B cell (primary cell): ENCODE measurements at regions of chr20 and their contacts with region 1.

Region 1: DNA sequence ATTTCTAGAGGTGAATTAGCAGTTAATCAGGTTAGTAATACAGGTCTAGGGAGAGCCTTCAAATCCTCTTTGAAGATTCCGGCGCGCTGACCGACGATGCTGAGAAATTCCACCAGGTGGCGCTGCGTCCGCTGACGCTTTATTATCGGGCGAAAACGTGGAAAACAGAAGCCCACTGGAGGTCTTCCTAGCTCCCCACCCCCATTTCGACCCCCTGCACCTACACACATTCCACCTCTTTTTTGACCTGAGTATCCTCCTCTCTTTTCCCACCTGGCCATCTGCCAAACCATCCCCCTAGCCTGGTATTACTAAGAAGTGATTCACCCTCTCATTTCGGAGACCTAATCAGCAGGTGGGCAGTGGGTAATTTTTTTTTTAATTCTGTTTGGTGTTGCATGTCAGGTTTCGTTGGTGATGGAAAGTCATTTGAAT is 65.4 kb upstream of the RIN2 start:
- DNase-seq: peak; percentile 73
- ATAC-seq: peak; percentile 51
- H3K4me3 ChIP-seq: peak overlapping the region in 1 of 5 experiments; percentile 16
- H3K4me3 Mint-ChIP-seq: peak overlapping the region; percentile 60
- H3K27ac ChIP-seq: no peak overlapping the region
- H3K27ac Mint-ChIP-seq: no peak overlapping the region
- H3K4me1 ChIP-seq: peaks cover 5 to 9% of the 10 kb centered on the region in 2 donors
- H3K4me1 Mint-ChIP-seq: peaks cover 6% of the 10 kb centered on the region
- H3K27me3 ChIP-seq: peaks cover 0 to 2% (median 0%) of the 10 kb centered on the region in 4 experiments
- H3K27me3 Mint-ChIP-seq: peaks cover 4% of the 10 kb centered on the region
- CTCF ChIP-seq: peak; percentile 98

Region 2: GRCh38 chr20:19735446-19735845 is 42.7 kb after region 1 on chr20:
- CTCF ChIA-PET with region 1: no interaction called
- POLR2A ChIA-PET with region 1: no interaction called
- intact Hi-C with region 1: loop called (anchors 5 kb)
- DNase-seq: no peak
- ATAC-seq: peak; percentile 78
- H3K4me3 ChIP-seq: no peak overlapping the region
- H3K4me3 Mint-ChIP-seq: no peak overlapping the region
- H3K27ac ChIP-seq: no peak overlapping the region
- H3K27ac Mint-ChIP-seq: no peak overlapping the region
- H3K4me1 ChIP-seq: peaks cover 4 to 5% of the 10 kb centered on the region in 2 donors
- H3K4me1 Mint-ChIP-seq: peaks cover 10% of the 10 kb centered on the region
- H3K27me3 ChIP-seq: no peaks in the 10 kb centered on the region
- H3K27me3 Mint-ChIP-seq: peaks cover 7% of the 10 kb centered on the region
- CTCF ChIP-seq: no peak

Region 3: DNA sequence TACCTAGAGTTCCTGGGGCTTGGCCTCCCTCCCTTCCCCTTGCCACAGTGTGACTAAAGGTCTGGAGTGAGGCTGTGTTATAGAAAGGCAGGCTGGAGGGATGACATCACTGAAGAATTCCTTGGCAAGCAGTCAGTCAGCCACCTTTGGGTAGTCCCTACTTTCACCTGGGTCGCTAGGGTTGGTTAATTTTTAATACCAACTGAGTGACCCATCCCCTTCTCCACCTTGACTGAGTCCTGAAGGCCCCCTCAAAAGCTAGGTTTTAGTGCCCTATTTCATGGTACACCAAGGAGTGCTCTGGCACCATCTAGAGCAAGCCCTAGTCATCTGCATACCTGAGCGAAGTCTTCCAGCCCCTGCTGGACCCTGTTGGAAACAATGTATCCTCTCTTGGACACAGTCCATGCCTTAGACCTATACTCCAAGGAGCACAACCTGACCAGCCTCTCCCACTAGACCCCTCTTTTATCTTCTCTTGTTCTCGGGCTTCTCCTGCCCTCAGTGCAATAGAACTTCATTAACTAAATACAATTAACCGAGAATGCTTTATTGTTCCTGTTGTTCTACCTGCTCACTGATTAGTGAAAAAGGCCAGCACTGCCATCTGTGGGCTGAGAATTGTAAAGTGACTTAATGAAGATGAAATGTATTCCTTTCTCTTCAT is 109.9 kb after region 1 on chr20:
- CTCF ChIA-PET with region 1: interaction called, 28 read pairs
- POLR2A ChIA-PET with region 1: no interaction called
- intact Hi-C with region 1: loop called (anchors 1 kb)
- DNase-seq: peak; percentile 51
- ATAC-seq: peak; percentile 41
- H3K4me3 ChIP-seq: no peak overlapping the region
- H3K4me3 Mint-ChIP-seq: no peak overlapping the region
- H3K27ac ChIP-seq: no peak overlapping the region
- H3K27ac Mint-ChIP-seq: no peak overlapping the region
- H3K4me1 ChIP-seq: peaks cover 13 to 14% of the 10 kb centered on the region in 2 donors
- H3K4me1 Mint-ChIP-seq: peaks cover 15% of the 10 kb centered on the region
- H3K27me3 ChIP-seq: no peaks in the 10 kb centered on the region
- H3K27me3 Mint-ChIP-seq: no peaks in the 10 kb centered on the region
- CTCF ChIP-seq: peak; percentile 56

Region 4: DNA sequence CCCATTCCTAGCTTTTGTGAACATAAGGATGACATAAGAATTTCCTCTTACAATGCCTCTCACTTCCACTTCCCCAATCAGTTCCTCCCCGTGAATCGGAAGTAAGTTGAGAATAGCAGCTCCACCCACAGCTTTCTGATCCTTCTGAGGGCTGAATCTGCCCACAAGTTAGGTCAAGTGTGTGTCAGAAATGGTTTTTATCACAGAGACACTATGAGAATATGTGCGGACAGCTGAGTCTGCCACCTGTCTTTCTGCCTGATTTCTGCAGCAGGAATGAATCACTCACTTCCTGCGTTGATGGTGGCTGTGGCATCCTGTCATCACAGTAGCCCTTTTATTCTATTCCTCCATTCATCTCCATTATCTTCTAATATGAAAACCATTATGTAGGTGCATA is 135.5 kb after region 1 on chr20:
- CTCF ChIA-PET with region 1: interaction called, 29 read pairs
- POLR2A ChIA-PET with region 1: interaction called, 6 read pairs
- intact Hi-C with region 1: loop called (anchors 1 kb)
- DNase-seq: peak; percentile 84
- ATAC-seq: peak; percentile 91
- H3K4me3 ChIP-seq: no peak overlapping the region
- H3K4me3 Mint-ChIP-seq: peak overlapping the region; percentile 12
- H3K27ac ChIP-seq: peak overlapping the region; percentile 44 to 48
- H3K27ac Mint-ChIP-seq: peak overlapping the region; percentile 66
- H3K4me1 ChIP-seq: peaks cover 58 to 63% of the 10 kb centered on the region in 2 donors
- H3K4me1 Mint-ChIP-seq: peaks cover 62% of the 10 kb centered on the region
- H3K27me3 ChIP-seq: no peaks in the 10 kb centered on the region
- H3K27me3 Mint-ChIP-seq: peaks cover under 1% of the 10 kb centered on the region
- CTCF ChIP-seq: peak; percentile 50

Region 5: DNA sequence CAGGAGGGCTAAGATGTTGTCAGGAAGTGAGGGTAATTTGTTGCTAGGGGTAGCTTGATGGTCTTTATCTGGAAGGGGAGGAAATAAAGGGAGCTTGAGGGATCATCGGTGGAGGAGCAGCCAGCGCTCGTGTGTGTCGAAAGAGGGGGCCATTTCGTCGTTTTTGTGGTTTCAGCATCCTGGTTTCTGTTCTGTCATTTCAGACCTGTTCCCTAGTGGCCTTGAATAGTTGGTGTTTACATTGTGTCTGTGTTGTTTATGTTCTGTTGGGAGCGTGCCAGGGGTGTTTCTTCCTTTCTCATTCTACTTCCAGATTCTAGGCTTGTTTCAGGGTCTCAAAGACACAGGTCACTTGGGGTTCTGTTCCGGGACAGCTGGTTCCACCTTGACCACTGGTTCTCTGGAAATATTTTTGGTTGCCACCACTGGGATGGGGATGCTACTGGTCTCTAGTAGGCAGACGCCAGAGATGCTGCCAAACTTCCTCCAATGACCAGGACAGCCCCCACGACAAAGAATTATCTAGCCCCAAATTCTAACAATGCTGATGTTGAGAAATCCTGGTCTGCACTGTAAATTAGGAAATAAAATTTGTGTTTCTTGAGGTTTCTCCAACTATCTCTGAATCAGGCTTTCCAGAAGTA is 210.6 kb after region 1 on chr20:
- CTCF ChIA-PET with region 1: interaction called, 5 read pairs
- POLR2A ChIA-PET with region 1: no interaction called
- intact Hi-C with region 1: loop called (anchors 1 kb)
- DNase-seq: peak; percentile 80
- ATAC-seq: peak; percentile 90
- H3K4me3 ChIP-seq: no peak overlapping the region
- H3K4me3 Mint-ChIP-seq: no peak overlapping the region
- H3K27ac ChIP-seq: no peak overlapping the region
- H3K27ac Mint-ChIP-seq: peak overlapping the region; percentile 17
- H3K4me1 ChIP-seq: peaks cover 7 to 10% of the 10 kb centered on the region in 2 donors
- H3K4me1 Mint-ChIP-seq: peaks cover 11% of the 10 kb centered on the region
- H3K27me3 ChIP-seq: no peaks in the 10 kb centered on the region
- H3K27me3 Mint-ChIP-seq: peaks cover 8% of the 10 kb centered on the region
- CTCF ChIP-seq: peak; percentile 48

Region 6: DNA sequence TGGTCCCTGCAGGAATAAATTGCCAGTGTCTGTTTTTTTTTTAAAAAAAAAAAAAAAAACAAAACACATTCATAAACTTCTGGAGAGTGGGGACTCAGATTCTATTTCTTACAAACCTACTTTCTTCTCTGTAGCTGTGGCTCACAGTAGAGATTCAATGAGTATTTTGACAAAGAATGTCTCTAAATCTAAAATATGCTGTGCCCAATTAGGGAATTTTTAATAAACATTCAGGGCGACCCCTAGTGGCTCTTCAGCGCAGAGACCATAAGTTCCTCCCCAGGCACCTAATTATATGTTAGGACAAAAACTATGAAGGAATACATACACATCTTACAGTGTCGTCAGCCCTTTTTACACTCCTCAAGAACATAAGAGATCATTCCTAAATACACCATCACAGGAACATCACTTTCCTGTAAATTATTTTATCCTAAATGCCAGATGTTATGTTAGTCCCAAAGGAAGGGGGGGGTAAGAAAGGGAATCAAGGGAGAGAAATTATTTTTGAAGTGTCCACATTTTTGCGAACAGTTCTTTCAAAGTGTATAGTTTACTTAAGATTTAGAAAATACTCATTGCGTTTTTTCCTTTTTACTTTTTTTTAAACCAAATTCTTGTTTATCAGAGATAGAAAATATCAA is 302.6 kb after region 1 on chr20:
- CTCF ChIA-PET with region 1: interaction called, 21 read pairs
- POLR2A ChIA-PET with region 1: no interaction called
- intact Hi-C with region 1: no loop called
- DNase-seq: peak; percentile 74
- ATAC-seq: peak; percentile 45
- H3K4me3 ChIP-seq: no peak overlapping the region
- H3K4me3 Mint-ChIP-seq: no peak overlapping the region
- H3K27ac ChIP-seq: no peak overlapping the region
- H3K27ac Mint-ChIP-seq: no peak overlapping the region
- H3K4me1 ChIP-seq: no peaks in the 10 kb centered on the region
- H3K4me1 Mint-ChIP-seq: no peaks in the 10 kb centered on the region
- H3K27me3 ChIP-seq: no peaks in the 10 kb centered on the region
- H3K27me3 Mint-ChIP-seq: peaks cover 10% of the 10 kb centered on the region
- CTCF ChIP-seq: peak; percentile 94